ENCODE measurements at regions of chr2 and their contacts with region 1.

Region 1: GRCh38 chr2:98775146-98775986 is 44.4 kb upstream of the MGAT4A start:
- DNase-seq: no peak

Region 2: DNA sequence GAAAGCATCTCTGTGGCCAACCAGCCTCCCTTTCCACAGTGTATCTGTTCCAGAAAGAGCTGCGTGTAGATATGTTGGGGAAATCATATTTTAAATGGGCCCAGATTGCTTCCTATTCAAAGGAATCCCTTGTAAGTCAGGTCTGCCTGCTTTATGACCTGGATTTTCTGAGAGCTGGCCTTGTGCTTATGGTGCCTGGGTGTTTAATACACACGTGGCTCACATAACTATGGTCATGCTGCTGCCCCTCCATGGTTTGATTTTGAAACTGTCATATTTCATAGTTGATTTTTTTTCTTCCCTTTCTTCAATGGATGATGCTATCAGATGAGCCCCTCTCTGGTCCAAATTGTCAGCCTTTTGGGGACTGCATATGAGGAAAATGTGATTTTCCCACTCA is 540.6 kb before region 1 on chr2:
- intact Hi-C with region 1: loop called in 1 of 2 experiments (anchors 5 kb)
- DNase-seq: no peak

Region 3: GRCh38 chr2:98685930-98686887 is 89.2 kb before region 1 on chr2:
- intact Hi-C with region 1: loop called in 1 of 2 experiments (anchors 1 kb)
- DNase-seq: no peak

Region 4: GRCh38 chr2:98944775-98945174 is 169.4 kb after region 1 on chr2:
- intact Hi-C with region 1: no loop called
- DNase-seq: no peak

Measured in posterior vena cava (tissue), 2 donors.